Adrenal gland (tissue), 19 donors: ENCODE measurements at regions of chr17 and their contacts with region 1.

Region 1: GRCh38 chr17:65100316-65101140 is 36.6 kb upstream of the RGS9 start:
- DNase-seq: peak; percentile 82 to 91 (median 89)
- H3K4me3 ChIP-seq: peak overlapping the region in 2 of 4 donors; percentile 56
- H3K27ac ChIP-seq: peak overlapping the region; percentile 35 to 76 (median 60)
- H3K4me1 ChIP-seq: peaks cover 0 to 22% of the 10 kb centered on the region in 2 donors
- H3K27me3 ChIP-seq: no peaks in the 10 kb centered on the region
- CTCF ChIP-seq: peak; percentile 80 to 96 (median 90)
- POLR2A ChIP-seq: peak in 1 of 2 donors; percentile 30

Region 2: DNA sequence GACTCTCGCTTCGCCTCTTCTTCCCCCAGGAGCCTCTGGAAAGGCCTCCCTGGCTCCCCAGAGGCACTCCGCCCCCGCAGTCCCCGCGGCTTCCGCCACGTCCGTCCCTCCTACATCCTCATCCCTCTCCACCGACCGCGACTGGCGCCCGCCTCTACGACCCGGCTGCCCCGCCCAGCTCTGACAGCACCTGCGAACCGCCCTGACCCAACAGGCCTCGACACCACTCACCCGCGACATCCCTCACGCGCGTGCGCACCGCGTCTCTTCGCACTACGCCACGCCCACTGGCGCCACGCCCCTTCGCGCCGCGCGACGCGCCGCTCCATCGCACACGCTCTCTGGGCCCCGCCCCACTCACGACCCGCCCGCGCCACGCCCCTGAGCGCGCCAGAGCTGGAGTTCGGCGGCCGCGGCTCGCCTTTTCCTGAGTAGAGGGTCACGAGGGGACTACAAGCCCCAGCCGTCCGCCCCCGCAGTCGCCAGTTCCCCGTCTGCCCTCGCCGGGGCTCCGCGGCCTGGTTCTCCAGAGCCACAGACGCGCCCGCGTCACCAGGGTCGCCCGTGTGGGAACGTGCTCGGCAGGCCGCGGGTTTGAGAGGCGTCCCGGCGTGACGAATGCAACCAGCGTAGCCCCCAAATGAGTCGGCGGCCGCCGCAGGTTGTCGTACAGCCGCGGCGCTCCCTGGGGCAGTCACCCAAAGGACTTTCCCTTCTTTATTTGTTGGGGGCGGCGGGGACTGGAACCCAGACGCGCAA is 125.0 kb before region 1 on chr17:
- intact Hi-C with region 1: loop called in 1 of 2 experiments (anchors 10 kb)
- DNase-seq: peak; percentile 95 to 98 (median 97)
- H3K4me3 ChIP-seq: peak overlapping the region in 2 of 4 donors; percentile 51 to 79
- H3K27ac ChIP-seq: peak overlapping the region; percentile 89 to 99 (median 99)
- H3K4me1 ChIP-seq: peaks cover 14 to 19% of the 10 kb centered on the region in 2 donors
- H3K27me3 ChIP-seq: no peaks in the 10 kb centered on the region
- CTCF ChIP-seq: peak in 1 of 6 experiments; percentile 12
- POLR2A ChIP-seq: peak; percentile 77 to 95

Region 3: DNA sequence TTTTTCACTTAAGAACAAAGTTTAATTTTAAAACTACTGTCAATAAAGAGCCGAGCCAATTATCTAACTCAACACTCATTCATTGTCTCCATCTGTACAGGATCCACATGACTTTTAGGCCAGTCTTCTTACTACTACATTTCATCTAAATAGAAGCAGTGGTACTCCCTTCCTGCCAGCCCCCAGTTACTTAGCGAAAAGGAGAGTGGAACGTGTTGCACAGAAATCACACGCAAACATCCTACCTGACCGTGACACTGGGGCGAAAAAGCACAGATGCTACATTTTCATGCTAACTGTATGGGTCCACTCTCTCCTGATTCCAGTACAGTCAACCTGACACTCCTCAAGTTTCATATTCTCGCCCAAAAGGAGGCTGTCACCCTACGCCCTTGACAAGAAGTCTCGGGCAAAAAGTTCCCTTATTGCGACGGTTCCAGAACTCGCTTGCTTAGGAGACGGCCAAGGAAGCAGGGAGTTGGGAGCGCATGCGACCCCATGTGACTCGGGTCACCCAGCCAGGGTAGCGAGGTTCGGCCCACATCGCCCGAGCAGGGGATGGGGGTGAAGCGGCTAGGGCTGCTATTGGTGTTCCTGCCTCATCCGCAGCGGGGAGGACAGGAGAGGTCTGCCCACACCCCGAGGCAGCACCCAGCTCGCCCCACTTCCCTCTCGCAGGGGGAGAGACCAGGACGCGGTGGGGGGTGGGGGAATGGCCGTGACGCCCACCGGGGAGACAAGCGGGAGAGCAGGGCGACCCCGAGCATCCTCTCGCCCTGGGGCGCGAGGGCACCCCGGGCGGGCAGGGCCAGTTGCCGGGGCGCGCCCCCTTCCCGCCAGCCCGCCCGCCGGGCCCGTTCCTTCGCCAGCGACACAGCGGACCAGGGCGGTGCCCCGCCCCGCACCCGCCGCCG is 44.9 kb before region 1 on chr17:
- intact Hi-C with region 1: loop called in 1 of 2 experiments (anchors 5 kb)
- DNase-seq: peak; percentile 76 to 87 (median 81)
- H3K4me3 ChIP-seq: peak overlapping the region; percentile 9 to 99 (median 78)
- H3K27ac ChIP-seq: peak overlapping the region; percentile 61 to 100 (median 98)
- H3K4me1 ChIP-seq: peaks cover 10 to 54% of the 10 kb centered on the region in 2 donors
- H3K27me3 ChIP-seq: no peaks in the 10 kb centered on the region
- CTCF ChIP-seq: no peak
- POLR2A ChIP-seq: peak; percentile 47 to 68

Region 4: DNA sequence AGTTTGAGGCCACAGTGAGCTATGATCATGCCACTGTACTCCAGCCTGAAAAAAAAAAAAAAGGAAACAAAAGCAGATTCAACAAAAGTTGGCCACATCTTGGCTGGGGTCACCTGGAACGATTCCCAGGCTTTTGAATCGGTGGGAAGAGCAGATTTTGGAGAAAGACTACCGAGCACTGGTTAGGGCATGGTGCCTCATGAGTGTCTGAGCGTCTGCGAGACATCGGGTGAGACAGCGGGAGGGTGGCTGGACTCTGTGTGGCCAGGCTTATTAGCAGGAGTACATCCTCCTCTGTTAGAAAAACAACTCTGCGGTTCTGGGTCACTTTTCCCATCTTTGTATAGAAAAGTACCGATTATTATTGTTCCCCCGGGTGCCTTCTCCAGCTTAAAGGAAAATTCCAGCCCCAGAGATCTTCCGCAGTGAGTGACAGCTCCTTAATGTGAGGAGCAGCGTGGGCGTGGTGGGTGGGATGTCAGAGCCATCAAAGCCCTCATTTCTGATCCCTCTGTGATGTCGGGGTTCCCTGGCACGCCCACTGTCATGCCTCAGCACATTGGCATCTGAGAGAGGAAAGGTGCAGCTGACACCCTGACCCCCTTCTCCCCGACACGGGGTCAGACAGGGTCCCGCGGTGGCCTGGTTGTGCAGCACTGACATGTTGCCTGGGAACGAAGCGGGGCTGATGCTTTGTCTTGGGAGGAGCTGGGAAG is 43.5 kb after region 1 on chr17:
- intact Hi-C with region 1: no loop called
- DNase-seq: no peak
- H3K4me3 ChIP-seq: no peak overlapping the region
- H3K27ac ChIP-seq: no peak overlapping the region
- H3K4me1 ChIP-seq: peaks cover 0 to 4% of the 10 kb centered on the region in 2 donors
- H3K27me3 ChIP-seq: no peaks in the 10 kb centered on the region
- CTCF ChIP-seq: no peak
- POLR2A ChIP-seq: no peak

Region 5: GRCh38 chr17:65231662-65232335 is 131.3 kb after region 1 on chr17:
- intact Hi-C with region 1: no loop called
- DNase-seq: peak; percentile 59 to 75 (median 71)
- H3K4me3 ChIP-seq: no peak overlapping the region
- H3K27ac ChIP-seq: no peak overlapping the region
- H3K4me1 ChIP-seq: peaks cover 0 to 18% of the 10 kb centered on the region in 2 donors
- H3K27me3 ChIP-seq: no peaks in the 10 kb centered on the region
- CTCF ChIP-seq: peak; percentile 23 to 77 (median 69)
- POLR2A ChIP-seq: no peak

Region 6: DNA sequence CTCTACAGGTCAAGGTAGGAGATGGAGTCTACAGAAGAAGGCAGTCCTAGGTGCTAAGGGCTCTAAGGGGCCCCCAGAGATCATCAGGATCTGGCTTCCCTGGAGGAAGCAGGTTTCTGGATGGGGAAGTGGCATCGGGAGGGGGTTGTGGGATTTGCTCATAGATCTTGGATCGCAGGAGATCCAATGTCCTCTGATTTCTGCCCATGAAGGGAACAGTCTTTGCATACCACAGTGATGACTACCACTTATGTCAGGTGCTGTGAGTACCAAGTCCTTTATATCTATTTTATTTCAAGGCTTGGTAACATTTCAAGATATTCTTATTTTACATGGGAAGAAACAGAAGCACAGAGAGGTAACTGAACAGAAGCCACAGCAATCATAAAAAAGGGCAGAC is 200.7 kb after region 1 on chr17:
- intact Hi-C with region 1: no loop called
- DNase-seq: no peak
- H3K4me3 ChIP-seq: no peak overlapping the region
- H3K27ac ChIP-seq: no peak overlapping the region
- H3K4me1 ChIP-seq: no peaks in the 10 kb centered on the region
- H3K27me3 ChIP-seq: no peaks in the 10 kb centered on the region
- CTCF ChIP-seq: no peak
- POLR2A ChIP-seq: no peak